ENCODE measurements at regions of chr2 and their contacts with region 1.

Region 1: DNA sequence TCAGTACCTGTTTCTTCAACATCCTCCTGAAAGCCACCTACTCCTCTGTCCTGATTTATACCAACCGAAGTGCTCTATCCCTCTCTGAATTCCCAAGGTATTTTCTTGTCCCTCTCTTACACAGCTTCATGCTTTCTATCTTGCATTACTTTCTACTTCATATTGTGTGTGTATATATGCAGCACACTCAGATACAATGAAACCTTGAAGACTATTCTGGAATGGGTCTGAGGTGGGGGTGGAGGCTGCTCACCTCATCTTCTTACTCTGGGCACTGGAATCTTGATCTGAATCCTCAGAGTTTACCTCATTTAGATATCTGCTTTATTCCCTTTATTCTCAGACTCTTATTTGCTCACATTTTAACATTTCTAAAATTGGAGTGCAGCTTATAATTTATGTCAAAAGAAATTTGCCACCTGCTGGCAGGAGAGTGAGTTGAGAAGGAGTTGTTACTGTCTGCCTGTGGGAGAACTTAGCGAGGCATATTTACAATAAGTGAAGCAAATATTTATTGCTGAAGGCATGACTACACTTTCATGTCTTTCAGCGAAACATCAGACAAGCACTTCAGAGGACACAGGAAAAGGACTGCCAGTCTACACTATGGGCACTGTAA is 16.6 kb upstream of the KIAA2012 start:
- DNase-seq: peak in 3 of 14 experiments; percentile 9 to 29 (median 14)
- ATAC-seq: no peak
- H3K4me3 ChIP-seq: no peak overlapping the region
- H3K4me3 Mint-ChIP-seq: no peak overlapping the region
- H3K27ac ChIP-seq: no peak overlapping the region
- H3K27ac Mint-ChIP-seq: no peak overlapping the region
- H3K4me1 ChIP-seq: no peaks in the 10 kb centered on the region
- H3K4me1 Mint-ChIP-seq: no peaks in the 10 kb centered on the region
- H3K27me3 ChIP-seq: peaks cover 5 to 16% of the 10 kb centered on the region in 2 experiments
- H3K27me3 Mint-ChIP-seq: peaks cover 64% of the 10 kb centered on the region
- CTCF ChIP-seq: peak; percentile 24

Region 2: DNA sequence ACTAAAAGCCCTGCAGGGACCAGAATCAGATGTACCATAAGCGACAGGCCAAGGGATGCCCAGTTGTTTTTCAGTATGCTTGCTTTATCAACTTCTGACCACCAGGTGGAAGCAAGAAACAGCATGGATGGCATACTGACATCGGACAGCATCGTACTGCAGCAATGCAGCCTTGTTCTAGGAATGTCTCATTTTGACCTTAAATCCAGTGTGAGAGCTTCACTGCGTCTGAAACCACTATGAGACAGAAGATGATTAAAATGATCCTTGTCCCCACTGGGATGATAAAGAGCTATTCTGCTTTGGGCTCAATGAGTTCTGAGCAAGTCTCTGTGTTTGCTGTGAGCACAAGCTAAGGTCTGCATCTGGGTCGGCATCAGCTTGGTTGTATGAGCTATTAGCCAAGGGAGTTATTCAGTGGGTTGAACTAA is 195.8 kb before region 1 on chr2:
- CTCF ChIA-PET with region 1: no interaction called
- POLR2A ChIA-PET with region 1: no interaction called
- intact Hi-C with region 1: loop called (anchors 1 to 10 kb)
- DNase-seq: peak in 11 of 14 experiments; percentile 3 to 72 (median 19)
- ATAC-seq: peak; percentile 71
- H3K4me3 ChIP-seq: no peak overlapping the region
- H3K4me3 Mint-ChIP-seq: no peak overlapping the region
- H3K27ac ChIP-seq: no peak overlapping the region
- H3K27ac Mint-ChIP-seq: no peak overlapping the region
- H3K4me1 ChIP-seq: peaks cover 9% of the 10 kb centered on the region
- H3K4me1 Mint-ChIP-seq: peaks cover 20% of the 10 kb centered on the region
- H3K27me3 ChIP-seq: peaks cover 0 to 7% of the 10 kb centered on the region in 2 experiments
- H3K27me3 Mint-ChIP-seq: peaks cover 42% of the 10 kb centered on the region
- CTCF ChIP-seq: peak; percentile 75

Region 3: DNA sequence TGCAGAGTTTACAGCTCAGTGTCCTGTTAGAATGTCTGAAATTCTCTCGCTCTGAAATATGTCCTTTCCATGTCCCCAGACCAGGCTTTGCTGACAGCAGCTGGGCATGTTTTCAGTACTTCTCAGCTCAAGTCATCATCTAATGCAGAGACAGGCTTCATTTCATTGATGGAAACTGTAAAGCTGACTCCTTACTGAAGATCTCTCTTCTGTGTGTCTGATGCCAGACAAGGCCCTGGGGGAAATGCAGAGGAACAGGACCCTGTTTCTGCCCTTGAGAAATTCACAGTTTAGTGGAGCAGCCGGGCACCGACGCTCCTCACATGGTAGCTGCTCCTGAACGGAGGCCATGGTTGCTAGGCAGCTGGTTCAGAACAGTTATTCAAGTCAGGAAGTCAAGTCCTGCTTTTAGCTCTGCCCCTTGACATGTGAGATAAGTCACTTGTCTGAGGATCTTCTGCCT is 47.5 kb before region 1 on chr2:
- CTCF ChIA-PET with region 1: no interaction called
- POLR2A ChIA-PET with region 1: no interaction called
- intact Hi-C with region 1: loop called in 1 of 2 experiments (anchors 5 kb)
- DNase-seq: no peak
- ATAC-seq: no peak
- H3K4me3 ChIP-seq: no peak overlapping the region
- H3K4me3 Mint-ChIP-seq: no peak overlapping the region
- H3K27ac ChIP-seq: no peak overlapping the region
- H3K27ac Mint-ChIP-seq: no peak overlapping the region
- H3K4me1 ChIP-seq: no peaks in the 10 kb centered on the region
- H3K4me1 Mint-ChIP-seq: no peaks in the 10 kb centered on the region
- H3K27me3 ChIP-seq: no peaks in the 10 kb centered on the region
- H3K27me3 Mint-ChIP-seq: peaks cover 31% of the 10 kb centered on the region
- CTCF ChIP-seq: no peak

Region 4: GRCh38 chr2:202084265-202084664 is 27.8 kb after region 1 on chr2:
- CTCF ChIA-PET with region 1: no interaction called
- POLR2A ChIA-PET with region 1: no interaction called
- intact Hi-C with region 1: no loop called
- DNase-seq: no peak
- ATAC-seq: no peak
- H3K4me3 ChIP-seq: no peak overlapping the region
- H3K4me3 Mint-ChIP-seq: no peak overlapping the region
- H3K27ac ChIP-seq: no peak overlapping the region
- H3K27ac Mint-ChIP-seq: no peak overlapping the region
- H3K4me1 ChIP-seq: no peaks in the 10 kb centered on the region
- H3K4me1 Mint-ChIP-seq: no peaks in the 10 kb centered on the region
- H3K27me3 ChIP-seq: peaks cover 0 to 3% of the 10 kb centered on the region in 2 experiments
- H3K27me3 Mint-ChIP-seq: no peaks in the 10 kb centered on the region
- CTCF ChIP-seq: no peak

Measured in CD4-positive, alpha-beta T cell (primary cell).